Dendritic cell treated with granulocyte-macrophage colony-stimulating factor and Interleukin-4, amounts not matched to agents 40 ng/mL and 50 ng/mL, for 4 days (primary cell): ENCODE measurements at regions of chr10 and their contacts with region 1.

Region 1: DNA sequence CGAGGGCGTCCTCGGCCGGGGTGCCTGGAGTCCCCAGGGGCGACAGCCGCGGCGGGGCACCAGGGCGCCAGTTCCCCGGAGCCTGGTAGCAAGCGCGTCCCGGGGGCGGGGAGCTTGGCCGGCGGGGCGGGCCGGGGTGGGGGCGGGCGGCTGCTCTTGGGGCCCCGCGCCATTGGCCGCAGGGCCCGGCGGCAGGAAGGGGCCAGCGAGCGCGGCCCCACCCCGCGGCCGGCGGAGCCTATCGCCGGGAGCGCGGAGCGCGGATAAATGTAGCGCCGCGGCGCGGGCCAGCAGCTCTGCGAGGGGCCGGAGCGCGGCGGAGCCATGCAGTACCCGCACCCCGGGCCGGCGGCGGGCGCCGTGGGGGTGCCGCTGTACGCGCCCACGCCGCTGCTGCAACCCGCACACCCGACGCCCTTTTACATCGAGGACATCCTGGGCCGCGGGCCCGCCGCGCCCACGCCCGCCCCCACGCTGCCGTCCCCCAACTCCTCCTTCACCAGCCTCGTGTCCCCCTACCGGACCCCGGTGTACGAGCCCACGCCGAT is at the start of gene HHEX:
- H3K4me3 Mint-ChIP-seq: peak within 1 kb of the TSS; percentile 92
- H3K27ac Mint-ChIP-seq: peak within 1 kb of the TSS; percentile 96
- H3K4me1 Mint-ChIP-seq: peaks cover 50% of the 10 kb centered on the region
- H3K27me3 Mint-ChIP-seq: no peaks in the 10 kb centered on the region

Region 2: GRCh38 chr10:92757066-92757710 is 67.5 kb after region 1 on chr10:
- intact Hi-C with region 1: loop called (anchors 5 kb)
- H3K4me3 Mint-ChIP-seq: peak overlapping the region; percentile 31
- H3K27ac Mint-ChIP-seq: peak overlapping the region; percentile 88
- H3K4me1 Mint-ChIP-seq: peaks cover 58% of the 10 kb centered on the region
- H3K27me3 Mint-ChIP-seq: no peaks in the 10 kb centered on the region

Region 3: DNA sequence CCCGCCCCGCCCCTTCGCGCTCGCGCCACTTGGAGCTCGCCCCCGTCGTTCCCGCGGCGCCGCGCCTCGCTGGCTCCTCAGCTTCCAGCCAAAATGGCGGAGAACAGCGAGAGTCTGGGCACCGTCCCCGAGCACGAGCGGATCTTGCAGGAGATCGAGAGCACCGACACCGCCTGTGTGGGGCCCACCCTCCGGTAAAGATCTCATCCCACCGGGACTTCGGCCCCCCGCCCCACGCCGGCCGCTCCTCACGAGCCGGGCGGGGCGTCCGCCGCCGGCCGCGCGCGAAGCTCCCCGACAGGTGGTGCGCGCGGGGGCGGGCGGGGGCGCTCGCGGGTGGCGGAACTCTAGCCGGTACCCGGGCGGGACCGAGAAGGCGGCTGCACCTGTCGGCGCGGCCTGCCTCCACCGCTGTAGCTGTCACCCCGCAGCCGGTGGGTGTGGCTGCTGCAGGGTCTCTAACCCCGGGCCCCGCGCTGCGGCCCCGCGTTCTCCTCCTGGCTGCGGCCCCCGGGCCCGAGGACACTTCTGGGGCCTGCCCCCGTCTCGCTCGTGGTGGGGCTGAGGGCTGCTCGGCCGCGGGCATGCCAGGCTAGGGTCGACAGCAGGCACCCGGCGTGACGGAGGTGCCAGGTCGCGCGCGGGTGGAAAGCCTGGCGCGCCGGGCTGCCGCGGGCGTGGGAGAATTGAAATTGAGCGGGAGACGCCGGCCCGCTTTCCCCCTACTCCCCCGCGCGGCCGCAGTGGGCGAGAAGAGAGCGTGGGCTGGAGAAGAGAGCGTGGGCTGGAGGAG is 158.9 kb after region 1 on chr10 and contains the start of gene EXOC6:
- intact Hi-C with region 1: loop called (anchors 2 kb)
- H3K4me3 Mint-ChIP-seq: peak within 1 kb of the TSS; percentile 79
- H3K27ac Mint-ChIP-seq: peak within 1 kb of the TSS; percentile 85
- H3K4me1 Mint-ChIP-seq: peaks cover 39% of the 10 kb centered on the region
- H3K27me3 Mint-ChIP-seq: no peaks in the 10 kb centered on the region

Region 4: DNA sequence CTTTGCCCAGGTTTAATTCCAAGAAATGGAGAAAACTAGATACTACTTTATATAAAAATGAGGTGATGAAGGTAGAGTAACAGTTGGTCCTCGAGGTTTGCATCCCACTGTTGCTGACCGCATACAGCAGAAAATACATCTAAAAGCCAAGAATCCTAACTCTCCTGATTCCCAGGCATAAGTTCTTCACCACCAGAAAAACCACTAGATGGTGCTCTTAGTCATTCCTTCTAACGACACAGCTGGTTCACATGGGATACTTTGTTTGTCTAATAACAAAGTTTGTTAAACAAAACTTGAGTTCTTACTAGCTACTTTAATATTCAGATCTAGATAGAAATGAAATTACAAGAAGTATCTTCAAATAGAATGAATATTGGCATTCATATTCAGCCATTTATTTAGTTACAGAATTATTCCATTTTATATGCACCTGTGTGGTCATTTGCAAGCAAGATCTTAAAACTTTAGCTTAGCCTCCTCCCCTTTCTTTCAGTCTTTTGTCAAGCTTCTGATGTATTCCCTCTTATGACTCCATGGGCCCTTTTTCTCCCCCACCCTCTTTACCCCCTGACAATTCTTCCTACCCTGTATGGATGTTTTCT is 316.8 kb after region 1 on chr10:
- intact Hi-C with region 1: no loop called
- H3K4me3 Mint-ChIP-seq: no peak overlapping the region
- H3K27ac Mint-ChIP-seq: no peak overlapping the region
- H3K4me1 Mint-ChIP-seq: no peaks in the 10 kb centered on the region
- H3K27me3 Mint-ChIP-seq: no peaks in the 10 kb centered on the region